CD8-positive, alpha-beta memory T cell (primary cell): ENCODE measurements at regions of chr21 and their contacts with region 1.

Region 1: DNA sequence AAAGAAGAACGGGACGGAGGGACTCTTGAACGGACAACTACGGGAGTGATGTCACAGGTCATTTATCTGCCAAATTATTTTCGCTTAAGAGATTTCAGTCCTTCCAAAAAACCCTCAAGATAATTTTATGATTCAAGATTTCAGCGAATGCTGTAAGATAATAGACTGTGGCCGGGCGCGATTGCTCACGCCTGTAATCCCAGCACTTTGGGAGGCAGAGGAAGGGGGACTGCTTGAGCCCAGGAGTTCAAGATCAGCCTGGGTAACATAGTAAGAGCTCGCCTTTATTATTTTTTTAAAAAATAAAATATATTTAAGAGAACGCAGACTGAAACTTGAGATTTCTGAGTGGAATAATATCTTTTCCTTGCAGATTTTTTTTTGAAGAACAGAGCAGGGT is 609 bp downstream of the RWDD2B start:
- DNase-seq: no peak
- H3K4me3 ChIP-seq: peak overlapping the region; percentile 89
- H3K4me3 Mint-ChIP-seq: peak overlapping the region; percentile 74 to 90 (median 88)
- H3K27ac ChIP-seq: peak overlapping the region; percentile 92
- H3K27ac Mint-ChIP-seq: peak overlapping the region; percentile 36 to 97 (median 86)
- H3K4me1 ChIP-seq: peaks cover 34% of the 10 kb centered on the region
- H3K4me1 Mint-ChIP-seq: peaks cover 32 to 59% (median 42%) of the 10 kb centered on the region in 3 donors
- H3K27me3 ChIP-seq: no peaks in the 10 kb centered on the region
- H3K27me3 Mint-ChIP-seq: peaks cover 0 to 3% of the 10 kb centered on the region in 2 donors

Region 2: DNA sequence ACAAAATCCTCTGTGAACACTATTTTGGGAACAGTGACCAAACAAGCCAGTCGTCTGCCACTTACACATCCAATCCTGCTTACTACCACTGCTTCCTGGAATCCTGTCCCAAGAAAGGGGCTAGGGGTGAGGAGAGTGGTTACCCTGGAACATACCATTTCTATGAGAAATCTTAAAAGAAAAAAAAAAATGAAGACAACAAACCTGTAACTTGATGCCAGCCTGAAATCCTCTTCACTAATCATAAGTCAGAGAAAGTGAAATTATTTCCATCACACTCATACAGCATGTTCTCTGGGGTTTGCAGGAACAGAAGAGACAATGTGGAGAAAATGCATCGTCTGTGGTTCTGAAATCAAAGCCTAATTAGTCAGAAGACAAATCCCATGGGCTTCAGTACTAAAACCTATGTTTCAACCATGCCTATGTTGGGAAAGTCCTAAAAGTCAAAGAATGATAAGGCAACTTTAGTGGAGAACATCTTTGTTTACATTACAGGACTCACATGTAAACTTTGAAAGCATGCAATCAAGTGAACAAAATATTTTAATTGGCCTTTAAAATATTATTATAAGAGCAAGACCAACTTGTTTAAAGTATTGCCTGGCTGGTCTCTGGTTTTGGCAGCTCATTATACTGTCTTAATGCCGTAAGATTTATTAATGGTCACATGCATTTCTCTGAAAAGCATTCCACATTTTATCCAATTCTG is 246.6 kb before region 1 on chr21:
- CTCF ChIA-PET with region 1: no interaction called
- POLR2A ChIA-PET with region 1: no interaction called
- DNase-seq: no peak
- H3K4me3 ChIP-seq: no peak overlapping the region
- H3K4me3 Mint-ChIP-seq: no peak overlapping the region
- H3K27ac ChIP-seq: no peak overlapping the region
- H3K27ac Mint-ChIP-seq: peak overlapping the region in 3 of 8 donors; percentile 4 to 52 (median 7)
- H3K4me1 ChIP-seq: no peaks in the 10 kb centered on the region
- H3K4me1 Mint-ChIP-seq: peaks cover 9 to 36% (median 31%) of the 10 kb centered on the region in 3 donors
- H3K27me3 ChIP-seq: no peaks in the 10 kb centered on the region
- H3K27me3 Mint-ChIP-seq: no peaks in the 10 kb centered on the region

Region 3: GRCh38 chr21:28822486-28823335 is 195.8 kb before region 1 on chr21:
- CTCF ChIA-PET with region 1: no interaction called
- POLR2A ChIA-PET with region 1: no interaction called
- DNase-seq: no peak
- H3K4me3 ChIP-seq: no peak overlapping the region
- H3K4me3 Mint-ChIP-seq: no peak overlapping the region
- H3K27ac ChIP-seq: no peak overlapping the region
- H3K27ac Mint-ChIP-seq: no peak overlapping the region
- H3K4me1 ChIP-seq: no peaks in the 10 kb centered on the region
- H3K4me1 Mint-ChIP-seq: peaks cover 21 to 52% (median 50%) of the 10 kb centered on the region in 3 donors
- H3K27me3 ChIP-seq: no peaks in the 10 kb centered on the region
- H3K27me3 Mint-ChIP-seq: no peaks in the 10 kb centered on the region

Region 4: DNA sequence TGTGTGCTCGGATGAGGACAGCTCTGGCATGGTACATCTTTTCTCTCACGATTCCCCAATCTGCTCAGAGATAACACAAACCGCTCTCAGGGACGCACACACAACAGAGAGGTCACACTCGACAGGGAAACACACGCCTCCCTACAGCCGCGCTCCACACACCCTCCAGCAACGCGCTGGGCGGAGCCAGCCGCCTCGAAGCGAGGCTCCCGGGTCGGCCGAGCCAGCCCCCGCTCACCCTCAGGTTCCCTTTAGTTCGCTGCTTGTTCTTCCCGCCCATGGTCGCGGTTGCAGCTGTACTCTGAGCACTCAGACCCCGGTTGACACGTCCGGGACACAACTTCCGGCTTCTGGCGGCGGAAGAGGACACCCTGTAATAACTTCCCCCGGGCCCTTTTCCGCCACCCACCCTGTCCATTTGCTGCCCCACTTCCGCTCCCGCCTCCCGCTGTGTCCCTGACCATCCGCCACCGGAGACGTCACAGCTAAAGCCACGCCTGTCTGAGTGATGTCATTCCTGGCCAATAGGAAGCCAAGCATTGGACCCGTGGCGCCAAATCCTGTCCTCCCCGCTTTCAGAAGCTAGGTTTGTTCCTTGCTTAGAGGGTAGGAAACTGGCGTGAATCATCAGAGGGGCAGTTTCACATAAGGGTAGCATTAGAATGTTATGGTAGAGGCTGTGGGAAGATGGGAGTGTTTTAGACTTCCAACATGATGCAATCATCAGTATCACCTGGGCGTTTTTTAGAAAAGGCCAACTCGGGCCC is 25.8 kb before region 1 on chr21 and contains the start of gene LTN1:
- CTCF ChIA-PET with region 1: interaction called, 3 read pairs
- POLR2A ChIA-PET with region 1: interaction called, 12 read pairs
- DNase-seq: peak; percentile 98 to 99 (median 99)
- H3K4me3 ChIP-seq: peak within 1 kb of the TSS; percentile 88
- H3K4me3 Mint-ChIP-seq: peak within 1 kb of the TSS; percentile 85 to 97 (median 95)
- H3K27ac ChIP-seq: peak within 1 kb of the TSS; percentile 91
- H3K27ac Mint-ChIP-seq: peak within 1 kb of the TSS; percentile 78 to 100 (median 98)
- H3K4me1 ChIP-seq: peaks cover 34% of the 10 kb centered on the region
- H3K4me1 Mint-ChIP-seq: peaks cover 33 to 52% (median 48%) of the 10 kb centered on the region in 3 donors
- H3K27me3 ChIP-seq: no peaks in the 10 kb centered on the region
- H3K27me3 Mint-ChIP-seq: no peaks in the 10 kb centered on the region
- total RNA-seq, gene LTN1: 22.1 to 23.2 TPM

Region 5: DNA sequence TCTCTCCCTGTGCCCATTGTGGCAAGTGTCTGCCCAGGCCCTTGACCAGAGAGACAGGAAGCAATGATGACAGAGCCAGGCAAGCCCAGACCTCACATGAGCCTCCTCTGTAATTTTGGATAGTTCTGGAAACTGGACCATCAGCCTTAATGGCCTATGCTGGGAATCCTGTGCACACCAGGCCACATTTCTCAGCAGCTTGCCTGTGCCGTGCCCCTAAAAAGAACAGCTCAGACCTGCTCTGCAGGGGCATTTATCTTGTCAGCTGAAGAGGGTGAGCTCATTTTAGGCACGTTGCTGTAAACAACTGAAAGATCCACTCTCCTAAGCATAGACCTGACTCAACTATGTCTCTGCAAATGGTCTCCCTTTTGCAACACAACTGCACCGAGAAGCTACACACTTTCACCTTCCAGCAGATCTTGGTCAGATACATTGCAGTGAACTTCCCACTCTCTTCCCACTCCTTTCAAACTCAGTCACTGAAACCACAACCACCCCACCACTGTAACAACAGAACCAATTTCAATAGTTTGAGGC is 226.6 kb after region 1 on chr21:
- CTCF ChIA-PET with region 1: no interaction called
- POLR2A ChIA-PET with region 1: no interaction called
- DNase-seq: no peak
- H3K4me3 ChIP-seq: no peak overlapping the region
- H3K4me3 Mint-ChIP-seq: no peak overlapping the region
- H3K27ac ChIP-seq: no peak overlapping the region
- H3K27ac Mint-ChIP-seq: peak overlapping the region in 1 of 8 donors; percentile 82
- H3K4me1 ChIP-seq: no peaks in the 10 kb centered on the region
- H3K4me1 Mint-ChIP-seq: peaks cover 0 to 4% (median 0%) of the 10 kb centered on the region in 3 donors
- H3K27me3 ChIP-seq: no peaks in the 10 kb centered on the region
- H3K27me3 Mint-ChIP-seq: peaks cover 4% of the 10 kb centered on the region in 2 donors